Caco-2 (cell line): ENCODE measurements at regions of chr15 and their contacts with region 1.

Region 1: DNA sequence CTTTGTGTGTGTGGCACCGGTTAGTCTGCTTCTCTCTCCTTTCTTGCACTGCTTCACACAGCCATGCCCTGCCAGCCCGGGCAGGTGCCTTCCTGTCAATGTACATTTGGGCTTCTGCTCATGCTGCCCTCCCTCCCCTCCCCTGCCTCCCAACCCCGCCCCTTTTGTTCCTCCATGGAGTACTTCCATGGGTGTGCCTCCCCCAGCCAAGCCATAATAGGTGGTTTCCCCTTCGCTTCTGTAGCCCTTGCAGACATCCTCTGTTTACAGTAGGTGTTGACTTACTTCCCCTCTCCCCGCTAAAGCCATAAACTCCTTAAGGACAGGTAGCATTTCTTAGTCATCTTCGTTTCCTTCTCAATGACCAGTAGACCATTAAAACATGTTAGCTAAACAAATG is 31.8 kb upstream of the CRTC3 start:
- DNase-seq: peak; percentile 23 to 46
- H3K4me3 ChIP-seq: no peak overlapping the region
- H3K4me3 Mint-ChIP-seq: no peak overlapping the region
- H3K27ac Mint-ChIP-seq: no peak overlapping the region
- H3K4me1 ChIP-seq: no peaks in the 10 kb centered on the region
- H3K4me1 Mint-ChIP-seq: no peaks in the 10 kb centered on the region
- H3K27me3 ChIP-seq: no peaks in the 10 kb centered on the region
- H3K27me3 Mint-ChIP-seq: no peaks in the 10 kb centered on the region
- CTCF ChIP-seq: no peak

Region 2: GRCh38 chr15:90598031-90598577 is 100.2 kb after region 1 on chr15:
- CTCF ChIA-PET with region 1: no interaction called
- POLR2A ChIA-PET with region 1: no interaction called
- intact Hi-C with region 1: loop called (anchors 5 kb)
- DNase-seq: peak; percentile 51 to 59
- H3K4me3 ChIP-seq: no peak overlapping the region
- H3K4me3 Mint-ChIP-seq: no peak overlapping the region
- H3K27ac Mint-ChIP-seq: no peak overlapping the region
- H3K4me1 ChIP-seq: no peaks in the 10 kb centered on the region
- H3K4me1 Mint-ChIP-seq: no peaks in the 10 kb centered on the region
- H3K27me3 ChIP-seq: no peaks in the 10 kb centered on the region
- H3K27me3 Mint-ChIP-seq: no peaks in the 10 kb centered on the region
- CTCF ChIP-seq: peak in 1 of 2 experiments; percentile 39